Gastrocnemius medialis (tissue), 4 donors: ENCODE measurements at regions of chr17 and their contacts with region 1.

Region 1: DNA sequence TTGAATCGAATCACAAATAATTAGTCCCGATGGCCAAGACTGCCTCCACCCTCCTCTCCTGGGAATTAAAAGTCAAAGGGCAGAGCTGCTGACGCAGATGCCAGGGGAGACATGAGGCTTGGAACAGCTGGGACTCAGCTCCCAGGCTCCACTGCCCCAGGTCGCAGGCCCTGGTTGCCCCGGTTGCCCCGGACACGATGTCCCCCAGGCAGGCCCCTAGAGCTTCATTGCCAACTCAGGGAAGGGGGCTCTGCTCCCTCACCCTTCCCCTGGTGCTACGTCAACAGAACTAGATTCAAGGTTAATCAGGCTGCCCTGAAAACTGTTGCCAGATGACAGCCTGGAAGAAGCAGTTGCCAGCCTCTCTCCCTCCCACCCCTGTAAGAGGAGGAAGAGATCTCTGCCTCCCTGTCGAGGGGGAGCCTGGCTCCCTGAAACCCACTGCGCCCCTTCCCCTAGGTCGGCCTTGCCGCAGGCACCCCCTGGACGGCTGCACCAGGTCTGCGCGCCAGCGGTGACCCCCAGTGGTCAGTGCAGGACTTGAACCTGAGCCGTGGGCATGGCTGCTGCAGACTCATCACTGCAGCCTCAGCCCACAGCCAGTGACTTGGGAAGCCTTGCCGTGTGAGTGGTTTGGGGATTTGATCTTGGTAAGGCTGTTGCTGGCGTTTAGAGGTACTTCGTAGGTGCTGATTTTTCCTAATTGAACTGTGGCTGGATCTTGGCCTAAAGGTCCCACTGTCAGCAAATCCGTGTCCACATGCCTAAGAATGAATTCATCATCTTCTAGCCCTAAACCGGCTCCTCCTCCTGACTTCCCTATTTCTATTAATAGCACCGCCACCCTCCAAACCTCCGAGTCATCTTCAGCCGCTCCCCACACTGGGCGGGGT is 84.1 kb upstream of the TOB1 start:
- DNase-seq: peak; percentile 87 to 97
- ATAC-seq: peak; percentile 55 to 70
- H3K4me3 ChIP-seq: peak overlapping the region; percentile 4 to 32 (median 21)
- H3K27ac ChIP-seq: peak overlapping the region; percentile 98 to 100 (median 100)
- H3K4me1 ChIP-seq: peaks cover 59 to 70% of the 10 kb centered on the region in 2 donors
- H3K27me3 ChIP-seq: no peaks in the 10 kb centered on the region
- CTCF ChIP-seq: peak; percentile 79 to 96 (median 86)
- POLR2A ChIP-seq: peak; percentile 29 to 47

Region 2: GRCh38 chr17:50425682-50426471 is 524.4 kb before region 1 on chr17 and contains the start of gene ACSF2:
- in situ Hi-C with region 1: no loop called
- intact Hi-C with region 1: loop called (anchors 10 kb)
- DNase-seq: peak; percentile 69 to 77
- ATAC-seq: peak; percentile 48 to 55
- H3K4me3 ChIP-seq: peak within 1 kb of the TSS; percentile 68 to 94 (median 86)
- H3K27ac ChIP-seq: peak within 1 kb of the TSS; percentile 93 to 96 (median 94)
- H3K4me1 ChIP-seq: peaks cover 40 to 50% of the 10 kb centered on the region in 2 donors
- H3K27me3 ChIP-seq: no peaks in the 10 kb centered on the region
- CTCF ChIP-seq: no peak
- POLR2A ChIP-seq: peak; percentile 81 to 88
- total RNA-seq, gene ACSF2: 8.7 to 61.4 (median 34.2) TPM

Region 3: DNA sequence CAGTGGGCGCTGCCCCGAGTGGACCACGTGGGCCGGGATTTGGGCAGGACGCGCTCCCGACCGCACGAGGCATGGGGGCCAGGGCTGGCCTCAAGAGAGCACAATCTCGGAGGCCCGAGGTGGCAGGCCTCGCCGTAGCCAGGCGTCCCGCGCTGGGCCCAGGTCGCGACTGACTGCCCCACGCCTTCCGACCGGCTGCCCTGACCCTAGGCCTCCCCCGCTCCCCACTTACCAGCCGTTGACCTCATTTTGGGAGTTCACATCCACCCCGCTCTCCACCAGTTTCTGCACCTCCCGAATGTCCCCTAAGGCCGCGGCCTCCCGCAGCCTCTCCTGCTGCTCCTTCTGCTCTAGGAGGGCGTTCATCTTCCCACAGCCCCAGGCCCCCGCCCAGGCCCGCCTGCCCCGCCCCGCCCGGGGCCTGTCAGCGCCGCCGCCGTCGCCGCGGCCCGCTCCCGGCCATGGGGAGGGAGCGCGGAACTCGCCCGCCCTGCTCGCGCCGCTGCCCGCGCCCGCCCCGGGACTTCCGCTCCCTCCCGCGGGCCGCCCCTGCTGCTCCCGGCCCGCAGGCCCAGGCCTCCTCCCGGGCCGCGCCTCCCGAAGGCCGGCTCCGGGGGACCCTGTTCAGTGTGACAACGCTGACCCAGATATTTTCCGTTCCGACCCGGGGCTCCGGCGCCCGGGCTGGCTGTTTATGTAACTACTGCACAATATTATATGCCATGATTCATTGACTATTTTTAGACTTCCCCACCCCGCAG is 242.8 kb before region 1 on chr17 and contains the start of gene ANKRD40:
- in situ Hi-C with region 1: no loop called
- intact Hi-C with region 1: loop called (anchors 5 kb)
- DNase-seq: peak; percentile 90 to 93
- ATAC-seq: peak; percentile 94 to 95
- H3K4me3 ChIP-seq: peak within 1 kb of the TSS; percentile 64 to 83 (median 76)
- H3K27ac ChIP-seq: peak within 1 kb of the TSS; percentile 90 to 97 (median 96)
- H3K4me1 ChIP-seq: peaks cover 42 to 43% of the 10 kb centered on the region in 2 donors
- H3K27me3 ChIP-seq: no peaks in the 10 kb centered on the region
- CTCF ChIP-seq: peak in 2 of 5 experiments; percentile 10 to 26
- POLR2A ChIP-seq: peak; percentile 87 to 88
- total RNA-seq, gene ANKRD40: 97.3 to 135 (median 112) TPM

Region 4: GRCh38 chr17:50737118-50737698 is 213.0 kb before region 1 on chr17:
- in situ Hi-C with region 1: no loop called
- intact Hi-C with region 1: no loop called
- DNase-seq: no peak
- ATAC-seq: no peak
- H3K4me3 ChIP-seq: no peak overlapping the region
- H3K27ac ChIP-seq: no peak overlapping the region
- H3K4me1 ChIP-seq: peaks cover 8 to 11% of the 10 kb centered on the region in 2 donors
- H3K27me3 ChIP-seq: no peaks in the 10 kb centered on the region
- CTCF ChIP-seq: no peak
- POLR2A ChIP-seq: no peak

Region 5: DNA sequence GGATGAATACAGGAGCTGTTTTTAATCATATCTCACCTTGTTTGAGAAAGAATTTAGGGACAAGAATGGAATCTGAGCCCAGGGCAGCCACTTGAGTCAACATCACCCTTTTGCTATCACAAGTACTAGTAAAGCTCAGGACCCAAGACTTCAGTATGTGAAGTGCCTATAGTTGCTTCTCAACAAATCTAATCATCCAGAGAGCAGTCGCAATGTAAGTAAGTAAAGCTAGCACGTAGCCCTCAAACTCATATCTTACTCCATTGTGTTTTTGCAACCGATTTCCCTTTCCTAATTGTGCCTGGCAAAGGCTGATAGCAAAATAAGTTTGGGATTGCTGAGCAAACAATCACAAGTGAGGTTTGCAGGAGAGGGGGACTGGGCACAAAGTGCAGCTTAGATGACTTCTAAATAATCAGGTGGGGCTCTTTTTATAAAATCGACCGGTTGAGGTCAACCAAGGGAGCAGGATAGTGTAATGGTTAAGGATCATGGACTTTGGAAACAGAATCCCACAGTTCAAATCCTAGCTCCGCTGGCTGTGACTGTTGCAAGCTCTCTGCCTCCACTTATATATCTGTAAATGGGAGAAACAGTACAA is 97.1 kb before region 1 on chr17:
- in situ Hi-C with region 1: loop called in 1 of 4 experiments (anchors 5 kb)
- intact Hi-C with region 1: loop called (anchors 1 kb)
- DNase-seq: no peak
- ATAC-seq: no peak
- H3K4me3 ChIP-seq: no peak overlapping the region
- H3K27ac ChIP-seq: peak overlapping the region; percentile 88 to 95 (median 93)
- H3K4me1 ChIP-seq: peaks cover 25 to 51% of the 10 kb centered on the region in 2 donors
- H3K27me3 ChIP-seq: no peaks in the 10 kb centered on the region
- CTCF ChIP-seq: no peak
- POLR2A ChIP-seq: no peak

Region 6: GRCh38 chr17:50904521-50905459 is 45.4 kb before region 1 on chr17:
- in situ Hi-C with region 1: no loop called
- intact Hi-C with region 1: loop called (anchors 1 kb)
- DNase-seq: peak; percentile 9 to 46
- ATAC-seq: peak; percentile 54 to 59
- H3K4me3 ChIP-seq: peak overlapping the region in 3 of 4 donors; percentile 13 to 36 (median 22)
- H3K27ac ChIP-seq: peak overlapping the region; percentile 90 to 98 (median 94)
- H3K4me1 ChIP-seq: peaks cover 30 to 35% of the 10 kb centered on the region in 2 donors
- H3K27me3 ChIP-seq: no peaks in the 10 kb centered on the region
- CTCF ChIP-seq: no peak
- POLR2A ChIP-seq: peak in 1 of 2 donors; percentile 14